Activated CD4-positive, alpha-beta T cell treated with anti-CD3 and anti-CD28 coated beads for 36 hours (primary cell): ENCODE measurements at regions of chr7 and their contacts with region 1.

Region 1: DNA sequence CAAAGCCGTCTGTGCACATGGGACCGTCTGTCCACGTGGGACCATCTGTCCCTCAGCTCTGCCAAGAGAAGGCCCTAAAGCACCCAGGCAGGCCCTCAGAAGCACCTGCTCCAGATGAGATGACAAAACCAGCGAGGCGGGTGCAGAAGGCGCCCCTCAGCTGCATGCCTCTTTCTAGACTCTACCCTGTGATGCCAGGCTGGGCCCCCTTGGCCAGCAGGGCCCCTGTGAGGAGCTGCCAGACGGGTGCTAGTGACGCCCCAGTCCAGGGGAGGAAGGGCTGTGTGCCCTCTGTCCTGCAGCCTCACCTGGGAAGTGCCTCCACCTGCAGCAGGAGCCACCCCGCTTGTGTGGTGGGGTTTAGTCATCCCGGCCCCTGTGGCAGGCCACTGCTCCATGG is 309.2 kb upstream of the SHH start:
- DNase-seq: no peak
- ATAC-seq: no peak
- H3K4me3 Mint-ChIP-seq: no peak overlapping the region
- H3K27ac Mint-ChIP-seq: no peak overlapping the region
- H3K4me1 Mint-ChIP-seq: no peaks in the 10 kb centered on the region
- H3K27me3 Mint-ChIP-seq: peaks cover 2% of the 10 kb centered on the region

Region 2: GRCh38 chr7:155590215-155591018 is 531.0 kb before region 1 on chr7:
- CTCF ChIA-PET with region 1: no interaction called
- POLR2A ChIA-PET with region 1: no interaction called
- intact Hi-C with region 1: no loop called
- DNase-seq: no peak
- ATAC-seq: peak; percentile 26
- H3K4me3 Mint-ChIP-seq: no peak overlapping the region
- H3K27ac Mint-ChIP-seq: no peak overlapping the region
- H3K4me1 Mint-ChIP-seq: no peaks in the 10 kb centered on the region
- H3K27me3 Mint-ChIP-seq: peaks cover 28% of the 10 kb centered on the region

Region 3: DNA sequence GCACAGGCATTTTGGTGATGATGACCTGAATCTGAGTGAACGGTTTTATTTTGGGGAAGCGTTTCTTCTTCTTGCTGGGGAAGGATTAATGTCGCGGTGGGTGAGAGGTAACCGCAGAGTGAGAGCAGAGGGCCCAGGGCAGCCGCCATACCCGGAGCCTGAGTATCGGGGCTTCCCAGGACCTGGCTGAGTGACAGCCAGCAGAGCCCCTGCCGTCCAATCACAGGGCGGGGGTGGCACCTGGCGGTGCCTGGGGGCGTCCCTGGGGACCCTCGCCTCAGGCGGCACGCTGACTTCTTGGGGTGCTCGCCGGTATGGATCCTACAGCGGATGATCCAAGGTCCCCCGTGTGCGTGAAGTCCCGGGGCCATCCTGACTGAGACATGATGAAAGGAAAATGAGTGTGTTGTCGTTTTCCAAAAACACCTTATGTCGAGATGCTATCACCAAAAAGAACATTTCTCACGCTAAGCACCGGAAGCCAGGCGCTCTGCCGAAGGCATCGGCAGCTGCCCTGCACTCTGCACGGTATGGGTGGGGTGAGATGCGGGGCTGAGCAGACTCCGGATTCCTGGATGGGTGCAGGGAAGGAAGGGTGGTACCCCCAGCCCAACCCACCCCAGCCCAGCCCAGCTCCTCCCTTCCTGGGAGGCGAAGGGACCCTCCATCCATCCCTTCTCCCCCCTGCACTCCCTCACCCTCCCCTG is 81.3 kb before region 1 on chr7:
- CTCF ChIA-PET with region 1: no interaction called
- POLR2A ChIA-PET with region 1: no interaction called
- intact Hi-C with region 1: loop called in 1 of 2 experiments (anchors 5 kb)
- DNase-seq: no peak
- ATAC-seq: no peak
- H3K4me3 Mint-ChIP-seq: no peak overlapping the region
- H3K27ac Mint-ChIP-seq: no peak overlapping the region
- H3K4me1 Mint-ChIP-seq: no peaks in the 10 kb centered on the region
- H3K27me3 Mint-ChIP-seq: no peaks in the 10 kb centered on the region